Prostate gland (tissue), 2 donors: ENCODE measurements at regions of chr10 and their contacts with region 1.

Region 1: DNA sequence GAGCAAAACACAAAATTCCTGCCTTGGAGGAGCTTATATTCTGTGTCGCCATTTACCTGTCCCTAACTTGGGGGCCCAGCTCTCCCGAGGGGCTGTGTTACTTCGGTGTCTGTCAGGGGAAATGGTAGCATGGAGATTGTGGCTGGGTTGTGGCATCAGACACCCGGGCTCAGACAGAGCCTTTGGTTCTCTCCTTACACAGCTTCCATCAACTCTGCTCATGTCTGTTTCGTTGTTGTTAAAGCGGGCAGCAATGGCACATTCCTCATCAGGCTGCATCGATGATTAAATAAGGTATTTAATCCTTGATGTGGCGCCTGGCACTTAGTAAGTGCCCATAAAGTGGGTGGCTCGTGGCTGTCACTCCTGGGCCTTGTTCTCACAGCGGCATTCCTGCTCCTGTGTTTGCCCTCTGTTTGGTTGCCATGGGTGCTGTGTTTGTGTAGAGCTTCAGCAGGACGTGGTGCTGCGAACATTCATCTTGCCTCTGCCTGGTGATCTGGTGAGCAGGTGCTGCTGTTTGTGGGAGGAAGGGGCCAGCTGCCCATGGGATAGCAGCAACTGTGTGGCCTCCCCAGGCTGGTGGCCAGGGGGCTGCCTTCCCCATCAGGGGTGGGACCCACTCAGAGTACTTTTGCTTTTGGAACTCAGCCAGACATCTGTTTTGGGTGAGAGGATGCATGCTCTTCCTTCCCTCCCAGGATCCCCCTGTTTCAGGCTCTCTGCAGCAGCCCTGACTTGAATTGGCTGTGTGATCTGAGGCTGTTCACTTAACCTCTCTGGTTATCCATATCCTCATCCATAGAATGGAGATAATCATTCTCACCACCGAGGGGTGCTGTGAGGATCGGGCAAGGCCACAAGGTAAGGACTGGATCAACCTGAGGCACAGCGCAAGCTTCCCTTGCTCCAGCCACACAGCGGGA is 207.2 kb upstream of the SVIL start:
- DNase-seq: peak; percentile 54
- H3K4me3 ChIP-seq: no peak overlapping the region
- H3K27ac ChIP-seq: peak overlapping the region; percentile 78 to 86
- H3K4me1 ChIP-seq: peaks cover 3% of the 10 kb centered on the region
- H3K27me3 ChIP-seq: no peaks in the 10 kb centered on the region
- CTCF ChIP-seq: no peak
- POLR2A ChIP-seq: no peak

Region 2: DNA sequence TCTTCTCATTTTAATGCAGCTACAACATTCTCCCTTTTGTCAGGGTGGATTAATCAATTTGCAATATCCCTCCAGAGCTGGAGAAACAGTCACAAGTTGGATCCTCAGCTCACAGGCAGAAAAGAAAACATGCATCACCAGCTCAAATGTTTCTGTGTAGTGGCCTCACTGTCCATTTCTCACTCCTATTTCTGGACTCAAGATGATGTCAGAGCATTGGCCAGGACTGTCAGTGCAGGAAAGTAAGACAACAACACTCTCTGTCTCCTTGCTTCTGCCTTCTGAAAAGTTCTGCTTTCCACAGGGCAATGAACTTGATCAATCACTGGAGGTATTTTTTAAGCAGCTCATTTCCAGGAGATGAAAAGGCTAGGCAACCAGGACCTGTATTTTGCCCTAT is 199.0 kb before region 1 on chr10:
- intact Hi-C with region 1: loop called (anchors 5 kb)
- DNase-seq: no peak
- H3K4me3 ChIP-seq: no peak overlapping the region
- H3K27ac ChIP-seq: peak overlapping the region; percentile 59 to 68
- H3K4me1 ChIP-seq: no peaks in the 10 kb centered on the region
- H3K27me3 ChIP-seq: no peaks in the 10 kb centered on the region
- CTCF ChIP-seq: no peak
- POLR2A ChIP-seq: no peak

Region 3: DNA sequence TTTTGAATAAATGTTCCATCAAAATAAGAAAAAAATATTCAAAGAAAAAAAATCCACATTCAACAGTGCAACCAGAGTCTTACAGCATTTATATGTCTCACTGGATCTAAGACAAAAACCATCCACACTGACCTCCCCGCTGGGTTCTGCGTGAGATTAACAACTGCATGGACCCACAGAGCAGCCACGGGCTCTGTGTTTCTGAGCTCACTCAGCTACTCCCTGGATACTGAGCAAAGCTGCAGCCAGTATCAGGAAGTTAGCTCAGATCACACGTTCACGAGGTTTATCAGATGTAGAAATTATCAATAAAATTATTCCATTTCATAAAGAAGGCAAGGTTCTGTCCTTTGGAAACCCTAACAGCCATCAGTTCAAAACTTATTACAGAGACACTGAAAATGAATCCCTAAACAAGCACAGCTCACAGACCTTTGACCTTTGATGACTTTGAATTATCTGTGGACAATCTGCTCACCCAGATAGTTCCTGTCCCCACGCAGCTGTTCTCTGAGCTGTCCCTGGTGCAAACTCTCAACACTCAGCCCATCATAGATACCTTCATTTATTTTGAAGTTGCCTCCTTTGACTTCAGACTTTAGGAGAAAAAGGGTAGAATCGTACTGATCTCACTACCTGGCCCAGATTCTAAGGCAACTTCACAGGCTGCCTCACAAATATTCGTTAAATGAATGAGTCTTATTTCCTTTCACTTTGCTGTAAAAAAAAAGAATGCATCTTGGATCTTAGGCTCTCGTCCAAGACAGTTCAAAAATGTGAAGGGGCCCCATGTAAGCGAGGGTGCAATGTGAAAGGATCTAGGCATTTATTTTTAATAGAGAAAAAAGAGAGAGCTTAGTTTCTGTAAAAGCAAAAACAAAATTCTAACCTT is 139.5 kb before region 1 on chr10:
- intact Hi-C with region 1: no loop called
- DNase-seq: no peak
- H3K4me3 ChIP-seq: no peak overlapping the region
- H3K27ac ChIP-seq: no peak overlapping the region
- H3K4me1 ChIP-seq: no peaks in the 10 kb centered on the region
- H3K27me3 ChIP-seq: no peaks in the 10 kb centered on the region
- CTCF ChIP-seq: no peak
- POLR2A ChIP-seq: no peak

Region 4: DNA sequence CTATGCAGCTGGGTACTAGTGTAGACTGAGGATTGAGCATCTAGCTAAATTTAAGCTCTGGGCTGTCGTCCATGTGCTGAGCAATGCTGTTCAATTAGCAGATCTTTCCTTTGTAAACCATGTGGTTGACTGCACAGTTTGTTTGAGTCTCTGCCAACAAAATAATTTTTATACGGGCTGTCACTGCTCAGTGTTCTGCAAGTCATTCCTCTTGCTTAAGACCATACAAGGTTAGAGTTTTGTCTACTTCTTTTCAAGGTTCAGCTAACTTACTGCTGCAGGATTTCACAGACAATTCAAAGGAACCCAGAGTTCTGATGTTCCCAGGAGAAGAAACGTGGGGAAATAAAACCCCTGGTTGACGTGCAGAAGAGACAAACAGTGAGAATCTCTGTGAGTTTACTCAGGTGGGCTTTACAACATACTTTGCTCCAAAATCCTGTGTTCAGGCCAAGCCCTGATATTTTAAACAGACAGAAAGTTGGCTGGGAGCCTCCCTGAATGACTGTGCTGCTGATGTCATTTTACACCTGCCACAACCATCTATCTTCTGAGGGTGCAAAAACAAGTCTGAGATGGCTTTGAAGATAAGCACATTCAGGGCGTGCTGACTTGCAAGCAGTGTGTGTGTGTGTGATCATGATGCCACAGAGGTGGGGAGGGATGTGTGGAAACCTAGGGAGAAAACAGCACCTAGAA is 30.1 kb before region 1 on chr10:
- intact Hi-C with region 1: loop called (anchors 2 kb)
- DNase-seq: peak; percentile 74
- H3K4me3 ChIP-seq: no peak overlapping the region
- H3K27ac ChIP-seq: peak overlapping the region; percentile 74 to 86
- H3K4me1 ChIP-seq: no peaks in the 10 kb centered on the region
- H3K27me3 ChIP-seq: no peaks in the 10 kb centered on the region
- CTCF ChIP-seq: no peak
- POLR2A ChIP-seq: no peak